Posterior cingulate gyrus (tissue), 11 donors: ENCODE measurements at regions of chr21 and their contacts with region 1.

Region 1: DNA sequence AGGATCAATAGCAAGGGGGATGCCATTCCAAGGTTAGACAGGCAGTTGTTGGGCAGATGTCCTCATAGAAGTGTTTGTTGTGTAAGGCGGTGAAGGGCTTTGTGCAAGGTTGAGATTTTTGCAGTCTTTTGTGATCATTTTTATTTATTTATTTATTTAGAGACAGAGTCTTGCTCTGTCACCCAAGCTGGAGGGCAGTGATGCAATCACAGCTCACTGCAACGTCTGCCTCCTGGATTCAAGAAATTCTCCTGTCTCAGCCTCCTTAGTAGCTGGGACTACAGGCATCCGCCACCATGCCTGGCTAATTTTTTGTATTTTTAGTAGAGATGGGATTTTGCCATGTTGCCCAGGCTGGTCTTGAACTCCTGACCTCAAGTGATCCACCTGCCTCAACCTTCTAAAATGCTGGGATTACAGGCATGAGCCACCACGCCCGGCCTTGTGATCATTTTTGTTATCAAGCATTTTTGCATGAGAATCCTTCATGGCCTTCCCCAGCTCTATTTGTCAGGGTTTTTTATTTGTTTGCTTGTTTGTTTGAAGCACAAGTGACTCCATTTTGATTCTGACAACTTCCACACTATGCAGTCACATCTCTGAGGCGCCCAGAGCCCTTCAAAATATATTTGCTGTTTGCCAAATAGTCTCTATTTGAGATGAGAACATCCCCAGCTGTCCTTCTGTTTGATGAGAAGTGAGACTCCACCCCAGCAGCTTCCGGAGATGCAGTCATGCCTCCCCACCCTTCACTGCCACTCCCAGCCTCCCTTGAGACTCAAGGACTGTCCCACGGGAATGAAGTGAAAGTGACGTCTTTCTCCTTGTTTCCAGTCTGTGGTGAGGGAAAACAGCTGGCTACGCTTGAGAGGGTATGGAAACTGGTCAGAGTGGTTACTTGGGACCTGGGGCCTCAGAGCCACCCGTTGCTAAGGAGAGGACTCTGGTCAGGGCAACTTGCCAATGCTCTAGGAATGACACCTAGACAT is 38.0 kb downstream of the TMEM50B start:
- DNase-seq: no peak

Region 2: DNA sequence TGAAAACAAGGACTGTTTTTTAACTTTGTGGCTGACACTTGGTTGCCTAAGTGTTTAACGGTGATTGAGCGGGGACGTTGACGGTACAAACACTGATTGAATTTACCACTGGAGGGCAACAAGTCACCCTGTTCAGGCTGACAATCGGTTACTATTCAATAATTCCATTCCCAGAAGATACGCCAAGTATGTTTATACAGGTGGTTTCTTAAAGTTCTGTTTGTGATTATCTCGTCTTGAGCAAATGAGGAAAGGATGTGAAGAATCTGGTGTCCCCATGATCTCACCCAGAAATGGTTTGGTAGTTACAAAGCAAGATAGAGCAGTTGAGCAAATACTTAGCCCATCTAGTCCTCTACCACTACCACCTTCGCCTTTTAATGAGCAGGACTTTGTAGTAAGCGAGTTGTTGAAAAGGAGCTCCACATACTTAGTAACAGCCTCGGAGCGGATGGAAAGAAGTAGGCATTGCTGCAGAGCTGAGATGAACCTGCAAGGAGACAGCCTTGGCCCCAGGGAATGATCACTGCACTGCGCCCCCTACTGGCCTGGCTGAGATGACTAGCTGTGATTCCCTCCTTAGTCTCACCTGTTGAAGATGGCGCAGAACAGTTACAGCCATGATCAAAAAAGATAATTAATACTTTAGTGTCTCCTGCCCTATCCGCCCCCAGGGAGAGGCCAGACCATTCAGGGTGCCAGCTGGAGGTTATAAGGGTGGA is 80.7 kb before region 1 on chr21:
- intact Hi-C with region 1: loop called (anchors 2 kb)
- DNase-seq: peak; percentile 42 to 94 (median 76)

Region 3: DNA sequence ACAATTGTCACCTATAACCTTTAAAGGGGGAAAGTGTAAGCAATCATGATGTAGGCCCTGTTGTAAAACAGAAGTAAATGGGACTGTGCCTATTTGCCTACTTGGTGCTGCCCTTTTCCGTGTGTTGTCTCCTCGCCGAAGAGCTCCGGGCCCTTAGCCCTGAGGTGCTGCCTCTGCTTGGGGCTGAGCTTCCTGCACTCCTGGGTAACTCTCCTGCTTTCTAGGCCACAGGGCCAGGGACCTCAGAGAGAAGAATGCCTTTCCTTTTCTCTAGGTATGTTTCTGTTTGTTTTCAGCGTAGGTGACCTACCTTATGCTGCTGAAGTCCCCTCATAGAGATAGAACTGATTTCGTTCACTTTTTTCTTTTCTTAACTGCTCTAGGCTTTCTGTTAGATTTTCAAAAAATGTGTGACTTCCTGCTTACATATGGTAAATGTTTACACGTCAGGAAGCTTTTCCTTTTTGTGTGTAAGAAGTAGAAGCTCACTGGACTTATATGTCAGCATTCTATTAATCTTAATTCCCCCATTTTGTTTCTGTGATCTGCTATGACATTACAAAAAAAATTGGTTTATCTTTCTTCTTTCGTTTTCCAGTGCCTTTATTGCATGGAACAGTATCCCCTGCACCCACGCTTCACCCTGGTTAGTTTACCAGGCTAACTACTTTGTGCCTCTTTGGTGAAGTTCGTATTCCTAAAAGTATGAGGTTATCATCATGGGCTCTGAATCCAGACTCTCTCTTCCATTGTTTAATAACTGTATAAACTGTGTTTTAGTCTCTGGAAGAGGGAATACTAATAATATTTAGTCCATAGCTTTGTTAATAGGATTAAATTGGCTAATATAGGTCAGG is 262.2 kb after region 1 on chr21:
- intact Hi-C with region 1: no loop called
- DNase-seq: no peak